Brain microvascular endothelial cell (primary cell): ENCODE measurements at regions of chr14 and their contacts with region 1.

Region 1: GRCh38 chr14:33839193-33840076 is 111.4 kb downstream of the EGLN3 start:
- DNase-seq: peak; percentile 37
- H3K4me3 ChIP-seq: no peak overlapping the region
- H3K27ac ChIP-seq: no peak overlapping the region
- H3K27me3 ChIP-seq: no peaks in the 10 kb centered on the region
- CTCF ChIP-seq: peak; percentile 87

Region 2: DNA sequence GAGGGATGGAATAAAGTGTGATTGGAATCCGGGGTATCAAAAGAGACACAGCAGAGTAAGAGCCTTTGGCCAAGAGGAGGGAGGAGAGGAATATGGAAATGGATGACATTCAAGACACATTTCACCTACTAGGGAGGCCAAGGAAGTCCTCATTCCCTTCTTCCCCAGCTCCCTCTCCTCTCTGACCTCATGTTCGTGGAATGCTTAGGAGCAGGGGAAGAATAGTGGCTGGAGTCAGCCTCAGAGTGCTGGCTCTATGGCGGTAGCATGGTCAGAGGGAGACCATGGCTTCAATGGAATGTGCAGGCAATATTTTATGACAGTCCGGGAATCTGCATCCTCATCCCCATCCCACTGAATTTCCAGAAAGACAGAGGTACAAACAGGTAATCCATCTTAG is 85.2 kb before region 1 on chr14:
- in situ Hi-C with region 1: no loop called
- DNase-seq: no peak
- H3K4me3 ChIP-seq: no peak overlapping the region
- H3K27ac ChIP-seq: no peak overlapping the region
- H3K27me3 ChIP-seq: no peaks in the 10 kb centered on the region
- CTCF ChIP-seq: no peak

Region 3: GRCh38 chr14:33986804-33987203 is 147.4 kb after region 1 on chr14:
- in situ Hi-C with region 1: no loop called
- DNase-seq: peak; percentile 82
- H3K4me3 ChIP-seq: no peak overlapping the region
- H3K27ac ChIP-seq: no peak overlapping the region
- H3K27me3 ChIP-seq: no peaks in the 10 kb centered on the region
- CTCF ChIP-seq: no peak

Region 4: GRCh38 chr14:34098045-34098984 is 258.9 kb after region 1 on chr14:
- in situ Hi-C with region 1: loop called (anchors 25 kb)
- DNase-seq: peak; percentile 45
- H3K4me3 ChIP-seq: no peak overlapping the region
- H3K27ac ChIP-seq: no peak overlapping the region
- H3K27me3 ChIP-seq: no peaks in the 10 kb centered on the region
- CTCF ChIP-seq: peak; percentile 76